ENCODE measurements at regions of chr10 and their contacts with region 1.

Region 1: GRCh38 chr10:29377333-29377961 is 88.6 kb downstream of the LYZL1 start:
- DNase-seq: no peak
- H3K4me3 Mint-ChIP-seq: no peak overlapping the region
- H3K27ac Mint-ChIP-seq: no peak overlapping the region
- H3K4me1 Mint-ChIP-seq: no peaks in the 10 kb centered on the region
- H3K27me3 Mint-ChIP-seq: no peaks in the 10 kb centered on the region

Region 2: DNA sequence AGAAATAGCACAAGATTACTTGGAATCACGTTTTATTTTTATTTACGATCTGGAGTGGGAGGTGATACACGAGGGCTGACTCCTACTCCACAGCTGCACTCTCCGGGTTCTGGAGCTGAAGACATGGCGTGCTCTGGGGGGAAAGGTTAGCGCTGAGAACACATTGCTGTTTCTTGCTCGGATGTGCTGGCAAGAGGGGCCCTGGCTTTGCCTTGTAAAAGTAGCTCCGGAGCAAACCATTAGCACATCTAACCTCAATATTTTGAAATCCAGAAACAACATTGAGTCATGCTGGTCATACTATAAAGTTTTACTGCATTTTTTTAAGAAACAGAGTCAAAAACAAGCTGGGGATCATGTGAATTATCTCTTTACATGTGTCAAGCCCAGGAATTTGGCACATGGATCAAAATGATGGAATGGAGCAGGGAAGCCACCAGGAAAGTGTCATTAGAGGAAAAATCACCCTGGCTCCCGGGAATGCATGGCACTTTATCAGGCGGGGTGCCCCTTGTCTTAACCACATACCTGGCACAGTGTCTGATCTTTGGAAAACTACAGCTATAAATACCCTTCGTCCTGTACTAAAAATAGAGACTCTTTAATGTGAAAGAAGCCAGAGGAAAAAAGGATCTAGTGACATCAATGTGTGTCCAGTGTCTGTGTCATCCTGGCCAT is 120.2 kb before region 1 on chr10:
- intact Hi-C with region 1: no loop called
- DNase-seq: no peak
- H3K4me3 Mint-ChIP-seq: no peak overlapping the region
- H3K27ac Mint-ChIP-seq: no peak overlapping the region
- H3K4me1 Mint-ChIP-seq: no peaks in the 10 kb centered on the region
- H3K27me3 Mint-ChIP-seq: peaks cover 3% of the 10 kb centered on the region

Region 3: GRCh38 chr10:29496341-29497162 is 119.1 kb after region 1 on chr10:
- intact Hi-C with region 1: loop called (anchors 1 kb)
- DNase-seq: peak; percentile 34
- H3K4me3 Mint-ChIP-seq: no peak overlapping the region
- H3K27ac Mint-ChIP-seq: no peak overlapping the region
- H3K4me1 Mint-ChIP-seq: no peaks in the 10 kb centered on the region
- H3K27me3 Mint-ChIP-seq: no peaks in the 10 kb centered on the region

Region 4: GRCh38 chr10:29517352-29517923 is 140.0 kb after region 1 on chr10:
- intact Hi-C with region 1: loop called (anchors 1 kb)
- DNase-seq: no peak
- H3K4me3 Mint-ChIP-seq: no peak overlapping the region
- H3K27ac Mint-ChIP-seq: no peak overlapping the region
- H3K4me1 Mint-ChIP-seq: peaks cover under 1% of the 10 kb centered on the region
- H3K27me3 Mint-ChIP-seq: no peaks in the 10 kb centered on the region

Region 5: DNA sequence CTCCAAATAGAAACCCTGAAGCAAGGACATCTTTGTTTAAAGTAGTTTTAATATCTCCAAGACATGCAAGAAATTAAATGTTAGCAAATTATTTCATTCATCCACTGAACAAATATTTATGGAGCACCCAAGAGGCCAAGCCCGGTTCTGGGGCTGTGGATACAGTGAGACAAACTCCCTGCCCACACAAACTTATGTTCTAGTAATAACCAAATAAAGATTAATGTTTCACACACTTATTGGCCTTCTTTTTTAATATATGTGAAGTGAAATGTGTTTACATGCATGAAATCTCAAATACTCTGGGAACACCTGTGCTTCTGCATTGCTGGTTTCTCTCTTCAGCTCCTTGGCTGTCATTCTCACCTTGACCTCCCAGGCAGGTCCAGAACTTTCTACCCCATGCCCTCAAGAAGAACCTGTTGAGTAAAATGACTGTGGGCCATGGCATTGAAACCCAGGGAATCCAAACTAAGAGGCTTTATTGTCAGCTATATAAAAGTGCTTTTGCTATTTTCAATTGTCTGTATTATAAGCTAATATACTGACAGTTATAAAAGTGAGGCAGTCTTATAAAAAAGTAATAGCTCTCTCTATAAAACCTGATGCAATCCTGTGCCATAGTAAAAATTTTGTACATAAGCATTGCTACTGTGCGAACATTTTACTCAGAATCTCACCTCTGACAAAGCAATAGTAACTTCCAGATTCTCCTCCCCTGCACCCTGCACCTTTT is 213.6 kb after region 1 on chr10:
- intact Hi-C with region 1: loop called (anchors 2 kb)
- DNase-seq: no peak
- H3K4me3 Mint-ChIP-seq: no peak overlapping the region
- H3K27ac Mint-ChIP-seq: no peak overlapping the region
- H3K4me1 Mint-ChIP-seq: peaks cover 9% of the 10 kb centered on the region
- H3K27me3 Mint-ChIP-seq: peaks cover 5% of the 10 kb centered on the region

Measured in activated T-helper 1 cell treated with anti-CD3 and anti-CD28 coated beads, Interleukin-12 subunit alpha, Interleukin-12 subunit beta, Interleukin-2, Interleukin-4 antibody, amounts not matched to agents 30 ng/mL and 10 ng/mL and 1 ng/mL, durations not matched to agents 14 hours and 24 hours and 36 hours (primary cell).